Ovary (tissue), 10 donors: ENCODE measurements at regions of chr2 and their contacts with region 1.

Region 1: DNA sequence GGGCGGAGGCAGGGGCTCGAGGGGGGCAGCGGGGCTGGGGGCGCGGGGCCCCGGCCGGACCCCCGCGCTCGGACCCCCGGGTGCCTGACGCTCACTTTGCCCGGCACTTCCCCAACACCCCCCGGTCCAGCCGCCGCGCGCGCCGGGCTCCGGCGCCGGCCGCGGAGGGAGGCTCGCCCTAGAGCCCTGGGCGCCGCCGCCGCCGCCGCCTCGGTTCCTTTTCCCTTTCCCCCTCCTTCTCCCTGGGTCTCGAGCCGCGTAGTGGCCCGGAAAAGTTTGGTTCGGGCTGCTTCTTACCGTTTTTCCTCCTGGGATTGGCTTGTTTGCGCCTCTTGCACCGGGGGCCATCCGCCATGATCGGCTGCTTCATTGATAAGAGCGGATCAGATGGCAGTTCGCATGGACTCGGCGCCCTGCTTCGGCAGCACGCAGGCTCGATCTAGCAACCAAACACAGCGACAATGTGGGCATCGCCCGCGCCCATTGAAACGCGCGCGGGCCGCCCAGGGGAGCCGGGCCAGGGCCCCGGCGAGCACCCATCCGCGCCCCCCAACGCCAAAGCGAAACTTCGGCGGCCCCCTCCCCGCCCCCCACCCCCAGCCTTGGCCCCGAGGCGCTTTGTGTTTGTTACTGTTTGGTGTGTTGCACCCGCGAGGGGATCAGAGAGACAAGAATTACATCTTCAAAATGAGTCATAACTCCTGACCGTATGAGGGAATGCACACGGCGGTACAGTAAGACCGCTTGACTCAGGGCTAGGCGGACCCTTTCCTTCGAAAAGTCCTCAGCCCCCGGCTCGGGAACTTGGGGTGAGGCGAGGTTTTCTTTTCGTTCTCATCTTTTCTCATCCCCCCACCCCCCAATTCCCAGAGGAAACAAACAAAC is 2.7 kb downstream of the ZEB2 start:
- DNase-seq: peak; percentile 63 to 81 (median 75)
- H3K4me3 ChIP-seq: peak overlapping the region; percentile 75
- H3K27ac ChIP-seq: peak overlapping the region; percentile 95 to 99
- H3K4me1 ChIP-seq: peaks cover 6% of the 10 kb centered on the region
- H3K27me3 ChIP-seq: no peaks in the 10 kb centered on the region
- CTCF ChIP-seq: no peak
- EP300 ChIP-seq: no peak
- POLR2A ChIP-seq: peak; percentile 56

Region 2: GRCh38 chr2:143779021-143779420 is 738.2 kb before region 1 on chr2:
- intact Hi-C with region 1: no loop called
- DNase-seq: no peak
- H3K4me3 ChIP-seq: no peak overlapping the region
- H3K27ac ChIP-seq: no peak overlapping the region
- H3K4me1 ChIP-seq: no peaks in the 10 kb centered on the region
- H3K27me3 ChIP-seq: no peaks in the 10 kb centered on the region
- CTCF ChIP-seq: no peak
- EP300 ChIP-seq: no peak
- POLR2A ChIP-seq: no peak

Region 3: GRCh38 chr2:143936848-143937722 is 580.1 kb before region 1 on chr2:
- intact Hi-C with region 1: loop called in 3 of 4 experiments (anchors 2 to 5 kb)
- DNase-seq: peak; percentile 62 to 83 (median 75)
- H3K4me3 ChIP-seq: peak overlapping the region; percentile 49
- H3K27ac ChIP-seq: peak overlapping the region; percentile 97 to 98
- H3K4me1 ChIP-seq: peaks cover 8% of the 10 kb centered on the region
- H3K27me3 ChIP-seq: no peaks in the 10 kb centered on the region
- CTCF ChIP-seq: no peak
- EP300 ChIP-seq: no peak
- POLR2A ChIP-seq: peak; percentile 47

Region 4: GRCh38 chr2:144332356-144333142 is 184.7 kb before region 1 on chr2:
- intact Hi-C with region 1: loop called in 3 of 4 experiments (anchors 5 to 10 kb)
- DNase-seq: peak; percentile 87 to 93 (median 91)
- H3K4me3 ChIP-seq: peak overlapping the region; percentile 61
- H3K27ac ChIP-seq: peak overlapping the region; percentile 78 to 82
- H3K4me1 ChIP-seq: peaks cover 2% of the 10 kb centered on the region
- H3K27me3 ChIP-seq: no peaks in the 10 kb centered on the region
- CTCF ChIP-seq: no peak
- EP300 ChIP-seq: no peak
- POLR2A ChIP-seq: peak; percentile 51

Region 5: GRCh38 chr2:144449028-144449406 is 68.2 kb before region 1 on chr2:
- intact Hi-C with region 1: loop called in 2 of 4 experiments (anchors 2 to 10 kb)
- DNase-seq: peak in 1 of 5 donors; percentile 49
- H3K4me3 ChIP-seq: no peak overlapping the region
- H3K27ac ChIP-seq: no peak overlapping the region
- H3K4me1 ChIP-seq: peaks cover 18% of the 10 kb centered on the region
- H3K27me3 ChIP-seq: no peaks in the 10 kb centered on the region
- CTCF ChIP-seq: peak in 1 of 3 donors; percentile 11
- EP300 ChIP-seq: no peak
- POLR2A ChIP-seq: no peak